IMR-90 (cell line): ENCODE measurements at regions of chr10 and their contacts with region 1.

Region 1: GRCh38 chr10:81784111-81784597 is 90.8 kb upstream of the NRG3 start:
- DNase-seq: no peak
- ATAC-seq: no peak
- H3K4me3 ChIP-seq: no peak overlapping the region
- H3K27ac ChIP-seq: no peak overlapping the region
- H3K4me1 ChIP-seq: no peaks in the 10 kb centered on the region
- H3K27me3 ChIP-seq: no peaks in the 10 kb centered on the region
- CTCF ChIP-seq: no peak
- POLR2A ChIP-seq: no peak
- RAD21 ChIP-seq: no peak

Region 2: GRCh38 chr10:81759111-81759510 is 25.0 kb before region 1 on chr10:
- CTCF ChIA-PET with region 1: no interaction called
- POLR2A ChIA-PET with region 1: no interaction called
- dilution Hi-C with region 1: no loop called
- in situ Hi-C with region 1: no loop called
- intact Hi-C with region 1: loop called (anchors 1 kb)
- DNase-seq: no peak
- ATAC-seq: no peak
- H3K4me3 ChIP-seq: no peak overlapping the region
- H3K27ac ChIP-seq: no peak overlapping the region
- H3K4me1 ChIP-seq: no peaks in the 10 kb centered on the region
- H3K27me3 ChIP-seq: no peaks in the 10 kb centered on the region
- CTCF ChIP-seq: no peak
- POLR2A ChIP-seq: no peak
- RAD21 ChIP-seq: no peak

Region 3: GRCh38 chr10:81915504-81915897 is 131.3 kb after region 1 on chr10:
- CTCF ChIA-PET with region 1: no interaction called
- POLR2A ChIA-PET with region 1: no interaction called
- dilution Hi-C with region 1: no loop called
- in situ Hi-C with region 1: no loop called
- intact Hi-C with region 1: no loop called
- DNase-seq: no peak
- ATAC-seq: no peak
- H3K4me3 ChIP-seq: no peak overlapping the region
- H3K27ac ChIP-seq: no peak overlapping the region
- H3K4me1 ChIP-seq: no peaks in the 10 kb centered on the region
- H3K27me3 ChIP-seq: no peaks in the 10 kb centered on the region
- CTCF ChIP-seq: no peak
- POLR2A ChIP-seq: no peak
- RAD21 ChIP-seq: no peak

Region 4: DNA sequence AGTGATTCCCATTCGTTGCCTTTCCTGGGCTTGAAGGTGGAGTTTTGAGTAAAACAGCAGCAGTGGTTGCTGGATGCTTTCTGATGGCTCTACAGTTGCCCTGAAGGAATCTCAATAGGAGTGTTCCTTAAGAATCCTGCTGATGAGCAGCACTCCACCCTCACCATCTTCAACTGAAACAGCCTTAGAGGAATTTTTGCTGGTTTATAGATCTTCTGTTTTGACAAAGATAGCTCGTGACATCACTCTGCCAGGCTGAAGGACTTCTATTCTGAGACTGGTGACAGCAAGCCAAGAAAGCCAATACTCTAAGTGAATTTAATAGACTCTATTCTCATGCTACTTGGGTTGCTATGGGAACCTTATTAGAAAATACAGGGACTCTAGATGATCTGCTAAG is 1105.6 kb after region 1 on chr10:
- CTCF ChIA-PET with region 1: no interaction called
- POLR2A ChIA-PET with region 1: no interaction called
- dilution Hi-C with region 1: no loop called
- in situ Hi-C with region 1: no loop called
- intact Hi-C with region 1: no loop called
- DNase-seq: no peak
- ATAC-seq: no peak
- H3K4me3 ChIP-seq: no peak overlapping the region
- H3K27ac ChIP-seq: no peak overlapping the region
- H3K4me1 ChIP-seq: no peaks in the 10 kb centered on the region
- H3K27me3 ChIP-seq: no peaks in the 10 kb centered on the region
- CTCF ChIP-seq: no peak
- POLR2A ChIP-seq: no peak
- RAD21 ChIP-seq: no peak